Head of caudate nucleus (tissue), 42 donors: ENCODE measurements at regions of chr6 and their contacts with region 1.

Region 1: DNA sequence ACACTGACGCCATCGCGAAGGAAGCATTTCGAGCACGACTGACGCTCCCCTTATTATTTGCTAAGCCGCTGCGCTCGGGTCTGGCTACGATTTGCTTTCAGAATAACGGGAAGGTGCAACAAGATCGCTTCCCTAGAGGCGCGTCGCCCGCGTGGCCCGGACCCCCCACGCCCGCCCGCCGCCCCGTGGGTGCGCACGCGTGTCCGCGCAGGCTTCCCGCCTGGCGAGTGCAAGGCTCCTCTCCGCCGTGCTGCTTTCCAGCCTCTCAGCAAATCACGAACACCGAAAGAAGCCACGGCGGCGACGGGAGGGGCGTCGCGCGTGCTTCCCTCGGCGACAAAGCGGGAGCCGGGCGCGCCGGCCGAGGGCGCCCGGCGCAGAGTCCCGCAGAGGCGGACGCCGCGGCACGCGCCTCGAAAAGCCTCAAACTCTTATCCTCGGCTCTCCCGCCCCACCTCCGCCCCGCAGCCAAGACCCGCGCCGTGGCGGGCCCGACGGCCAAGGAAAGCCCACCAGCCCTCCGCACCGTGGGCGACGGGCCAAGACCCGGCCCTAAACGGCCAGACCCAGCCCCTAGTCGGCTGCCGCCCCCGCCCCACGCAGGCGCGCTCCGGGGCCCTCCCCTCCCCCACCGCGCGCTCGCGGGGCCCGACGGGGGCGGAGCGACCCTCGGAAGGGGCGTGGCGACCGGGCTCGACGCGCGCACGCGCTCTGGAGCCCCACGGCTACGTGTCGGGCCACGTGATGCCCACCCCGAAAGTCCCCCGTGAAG is 987 bp upstream of the QKI start:
- DNase-seq: peak; percentile 64 to 96 (median 89)

Region 2: GRCh38 chr6:162856885-162857284 is 556.6 kb before region 1 on chr6:
- intact Hi-C with region 1: loop called (anchors 5 kb)
- DNase-seq: peak in 41 of 42 donors; percentile 46 to 96 (median 79)

Region 3: GRCh38 chr6:163180874-163181541 is 232.5 kb before region 1 on chr6:
- intact Hi-C with region 1: loop called (anchors 5 kb)
- DNase-seq: peak; percentile 84 to 98 (median 94)

Region 4: DNA sequence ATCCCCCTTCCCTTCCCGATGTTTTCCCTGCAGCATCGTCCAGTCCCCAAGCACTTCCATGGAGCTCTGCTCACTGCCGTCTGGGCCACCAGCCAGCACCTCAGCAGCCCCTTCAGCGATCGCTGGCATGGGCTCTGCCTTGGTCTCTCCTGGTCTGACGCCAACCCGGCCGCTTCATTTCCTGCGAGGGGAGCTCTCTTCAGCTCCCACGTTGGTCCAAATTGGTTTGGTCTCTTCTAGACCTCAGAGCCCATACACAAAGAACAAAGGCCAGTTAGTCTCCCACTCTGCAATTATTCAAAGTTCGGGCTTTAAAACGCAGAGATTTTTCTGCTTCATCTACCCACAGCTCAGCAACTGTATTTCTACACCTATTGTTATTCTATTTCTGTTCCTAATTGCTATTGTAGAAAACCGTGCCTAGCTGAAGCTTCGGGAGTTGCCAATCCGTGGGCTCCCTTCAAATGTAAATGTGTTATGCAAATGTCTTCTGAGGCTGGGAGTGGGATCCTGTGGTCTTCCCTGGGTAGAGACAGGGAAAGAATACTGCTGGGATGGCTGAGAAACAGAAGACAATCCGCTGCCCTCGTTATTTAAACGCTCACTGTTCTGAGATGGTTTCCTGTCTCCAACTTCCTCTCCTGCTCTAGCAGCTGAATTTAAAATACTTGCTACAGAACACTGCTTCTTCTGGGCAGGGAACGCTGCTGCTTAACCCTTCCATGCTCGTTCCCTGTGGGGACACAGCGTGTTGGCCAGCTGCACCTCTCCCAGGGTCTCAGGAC is 153.2 kb before region 1 on chr6:
- intact Hi-C with region 1: loop called (anchors 5 kb)
- DNase-seq: peak in 40 of 42 donors; percentile 53 to 88 (median 75)

Region 5: DNA sequence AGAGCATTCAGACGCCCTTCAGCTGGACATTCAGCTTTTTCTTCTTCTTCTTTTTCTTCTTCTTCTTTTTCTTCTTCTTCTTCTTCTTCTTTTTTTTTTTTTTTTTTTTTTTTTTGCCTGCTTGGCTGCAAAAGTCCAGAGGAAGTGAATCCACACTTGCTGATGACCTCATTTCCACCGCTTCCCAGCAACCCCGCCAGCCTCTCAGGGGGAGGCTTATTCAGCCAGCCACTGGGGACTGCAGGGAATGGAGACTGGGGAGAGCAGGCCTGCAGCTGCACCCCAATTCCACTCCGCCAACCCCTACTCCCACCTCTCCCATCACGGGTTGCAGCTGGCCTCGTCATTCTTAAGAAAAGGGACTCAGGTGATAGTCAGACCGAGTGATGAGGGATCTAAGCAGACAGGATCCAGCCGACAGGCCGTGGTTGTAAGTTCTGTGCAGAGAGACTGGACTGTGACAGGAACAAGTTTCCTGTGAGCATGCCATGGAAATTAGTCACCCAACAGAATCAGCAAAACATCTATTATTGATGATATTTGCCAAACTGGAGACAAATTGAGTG is 58.0 kb before region 1 on chr6:
- intact Hi-C with region 1: loop called (anchors 5 kb)
- DNase-seq: peak in 41 of 42 donors; percentile 43 to 90 (median 75)

Region 6: GRCh38 chr6:163860287-163861081 is 447.0 kb after region 1 on chr6:
- intact Hi-C with region 1: no loop called
- DNase-seq: peak in 1 of 42 donors; percentile 8

Region 7: GRCh38 chr6:164106345-164106769 is 692.8 kb after region 1 on chr6:
- intact Hi-C with region 1: loop called (anchors 5 kb)
- DNase-seq: peak in 41 of 42 donors; percentile 37 to 86 (median 66)